Caco-2 (cell line): ENCODE measurements at regions of chr4 and their contacts with region 1.

Region 1: DNA sequence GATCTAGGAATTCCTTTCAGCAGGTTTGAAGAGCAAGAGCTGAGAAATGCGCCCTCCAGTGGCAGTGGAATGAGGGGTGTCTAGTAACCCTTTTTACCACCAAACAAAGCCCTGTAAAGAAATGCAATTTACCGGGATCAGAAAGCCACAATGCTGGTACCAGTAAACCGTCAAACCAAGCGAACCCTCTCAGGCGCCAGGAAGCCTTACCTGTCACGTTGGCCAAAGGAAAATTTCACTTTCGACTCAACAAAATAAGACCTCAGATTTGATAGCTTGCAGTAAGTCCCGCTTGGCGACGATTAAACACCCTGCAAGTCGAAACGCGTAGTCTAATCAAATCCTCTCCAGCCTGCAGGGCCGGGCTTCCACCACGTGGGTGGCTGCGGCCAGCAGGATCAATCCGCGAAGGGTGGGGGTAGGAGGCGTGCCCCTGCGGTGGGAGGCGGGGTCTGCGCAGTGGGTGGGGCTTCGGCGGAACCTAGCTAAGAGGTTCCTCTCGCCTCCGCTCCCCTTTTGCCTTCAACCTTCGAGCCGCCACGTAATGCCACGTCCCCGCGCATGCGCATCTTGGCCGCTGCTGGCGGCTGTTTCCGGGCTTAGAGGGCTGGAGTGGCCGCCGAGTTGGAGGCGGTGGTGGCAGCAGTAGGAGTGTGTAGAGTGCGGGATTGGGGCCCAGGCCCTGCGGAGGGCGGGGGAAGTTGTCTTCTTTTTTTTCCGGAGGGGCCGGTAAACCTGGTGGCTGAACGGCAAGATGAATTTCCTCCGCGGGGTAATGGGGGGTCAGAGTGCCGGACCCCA is at the start of gene USO1:
- DNase-seq: peak; percentile 98 to 99
- H3K4me3 ChIP-seq: peak within 1 kb of the TSS; percentile 99
- H3K4me3 Mint-ChIP-seq: peak within 1 kb of the TSS; percentile 90
- H3K27ac Mint-ChIP-seq: peak within 1 kb of the TSS; percentile 99
- H3K4me1 ChIP-seq: peaks cover 18% of the 10 kb centered on the region; the same call in 1 of the 2 replicates
- H3K4me1 Mint-ChIP-seq: peaks cover 15% of the 10 kb centered on the region
- H3K27me3 ChIP-seq: no peaks in the 10 kb centered on the region
- H3K27me3 Mint-ChIP-seq: no peaks in the 10 kb centered on the region
- CTCF ChIP-seq: peak; percentile 76 to 81
- total RNA-seq, gene USO1: 55.4 and 59.7 TPM in 2 replicates

Region 2: DNA sequence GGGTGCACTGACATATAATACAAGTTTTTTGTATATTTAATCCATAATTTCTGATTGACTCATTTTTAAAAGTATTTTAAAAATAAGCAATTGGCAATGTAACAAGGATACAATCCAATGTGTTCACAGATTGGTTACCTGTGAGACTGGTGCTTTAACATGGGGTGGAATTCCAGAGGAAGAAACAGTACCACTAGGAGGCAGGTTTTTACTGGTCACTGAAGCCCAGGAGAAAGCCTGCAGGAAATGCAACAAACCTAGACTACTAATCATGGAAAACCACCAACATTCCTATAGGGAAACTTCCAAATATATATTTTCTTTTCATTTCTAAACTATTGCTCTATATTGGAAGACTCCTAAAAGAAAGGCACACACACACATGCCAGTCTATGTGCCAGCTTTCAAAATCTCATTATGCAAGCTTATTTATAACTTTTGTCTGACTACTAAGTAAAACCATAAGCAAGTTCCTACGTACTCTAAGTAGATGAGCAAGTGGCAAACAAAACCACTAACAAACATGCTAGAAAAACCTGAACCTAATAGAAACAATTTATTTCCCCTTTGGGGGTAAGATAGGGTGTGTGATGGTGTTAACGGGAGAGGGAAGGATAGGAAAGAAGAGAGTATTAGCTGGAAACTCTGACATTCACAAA is 70.3 kb before region 1 on chr4:
- CTCF ChIA-PET with region 1: interaction called, 8 read pairs
- POLR2A ChIA-PET with region 1: interaction called, 3 read pairs
- intact Hi-C with region 1: loop called (anchors 1 kb)
- DNase-seq: peak in 1 of 2 experiments; percentile 56
- H3K4me3 ChIP-seq: no peak overlapping the region
- H3K4me3 Mint-ChIP-seq: no peak overlapping the region
- H3K27ac Mint-ChIP-seq: no peak overlapping the region
- H3K4me1 ChIP-seq: peaks cover 37% of the 10 kb centered on the region
- H3K4me1 Mint-ChIP-seq: peaks cover 6% of the 10 kb centered on the region
- H3K27me3 ChIP-seq: no peaks in the 10 kb centered on the region
- H3K27me3 Mint-ChIP-seq: no peaks in the 10 kb centered on the region
- CTCF ChIP-seq: peak; percentile 43 to 67

Region 3: DNA sequence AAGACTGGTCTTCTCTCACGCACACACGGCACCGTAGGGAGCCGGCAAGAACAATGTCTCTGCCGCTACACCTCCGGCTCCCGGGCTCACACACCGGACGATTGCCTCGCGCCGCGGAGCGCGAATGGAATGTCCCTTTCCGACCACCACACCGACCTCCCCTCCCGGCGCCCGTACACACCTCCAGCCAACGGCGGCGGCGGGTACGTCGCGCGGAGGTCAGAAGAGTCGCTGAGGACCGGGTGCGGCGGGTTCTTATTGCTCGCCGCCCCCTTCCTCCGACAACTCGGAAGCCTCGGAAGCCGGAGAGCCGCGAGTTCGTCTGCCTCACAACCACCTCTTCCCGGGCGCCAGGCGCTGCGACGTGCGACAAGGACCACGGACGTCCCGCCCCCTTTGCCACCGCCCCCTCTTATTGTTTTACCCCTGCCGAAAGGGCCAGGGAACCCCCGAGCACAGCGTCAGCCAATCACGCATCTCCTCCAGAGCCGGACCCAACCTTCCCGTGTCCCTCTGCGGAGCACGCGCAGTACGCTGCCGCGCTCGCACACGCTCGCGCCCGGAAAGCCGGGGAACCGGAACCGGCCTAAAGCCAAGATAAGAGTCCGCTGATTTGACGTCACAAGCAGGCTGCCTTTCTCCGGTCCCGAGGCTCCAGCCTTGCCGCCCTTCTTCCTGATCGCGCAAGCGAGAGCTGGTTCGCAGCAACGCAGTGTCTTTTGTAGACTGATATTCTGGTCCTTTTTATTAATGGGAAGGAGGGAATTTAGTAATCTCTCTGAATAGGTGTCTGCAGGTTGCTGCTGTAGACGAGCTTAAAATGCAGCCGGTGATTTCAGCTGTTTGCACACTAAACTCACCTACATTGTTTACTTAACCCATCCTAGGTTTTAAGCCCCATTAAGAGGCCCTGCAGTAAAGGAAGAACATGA is 51.0 kb before region 1 on chr4 and contains the start of gene G3BP2:
- CTCF ChIA-PET with region 1: interaction called, 5 read pairs
- POLR2A ChIA-PET with region 1: interaction called, 28 read pairs
- intact Hi-C with region 1: loop called (anchors 1 kb)
- DNase-seq: peak; percentile 97 to 98
- H3K4me3 ChIP-seq: peak within 1 kb of the TSS; percentile 76
- H3K4me3 Mint-ChIP-seq: peak within 1 kb of the TSS; percentile 96
- H3K27ac Mint-ChIP-seq: peak within 1 kb of the TSS; percentile 99
- H3K4me1 ChIP-seq: peaks cover 24% of the 10 kb centered on the region
- H3K4me1 Mint-ChIP-seq: peaks cover 20% of the 10 kb centered on the region
- H3K27me3 ChIP-seq: no peaks in the 10 kb centered on the region
- H3K27me3 Mint-ChIP-seq: no peaks in the 10 kb centered on the region
- CTCF ChIP-seq: no peak
- total RNA-seq, gene G3BP2: 187 TPM in 2 replicates

Region 4: DNA sequence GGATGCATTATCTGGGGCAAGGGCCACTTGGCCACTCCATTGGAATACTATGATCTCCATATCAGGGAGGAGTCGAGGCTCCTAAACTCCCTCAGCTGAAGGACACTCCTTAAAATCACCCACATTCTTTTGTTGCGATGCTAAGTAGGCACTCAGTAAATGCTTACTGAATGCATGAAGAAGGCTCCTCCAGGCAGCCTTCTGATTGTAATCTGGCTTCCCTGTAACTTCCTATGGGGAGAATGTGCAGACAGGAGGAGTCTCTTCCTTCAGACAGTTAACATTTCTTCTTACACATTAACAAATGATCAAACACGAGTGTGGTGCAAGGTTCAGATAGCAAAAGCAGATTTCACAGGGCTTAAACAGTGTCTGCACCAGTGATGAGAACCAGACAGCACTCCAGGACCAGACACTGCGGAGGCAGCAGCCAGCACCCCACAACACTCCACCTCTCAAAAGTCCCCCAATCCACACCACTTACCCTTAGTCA is 21.3 kb before region 1 on chr4:
- CTCF ChIA-PET with region 1: no interaction called
- POLR2A ChIA-PET with region 1: interaction called, 8 read pairs
- intact Hi-C with region 1: loop called (anchors 1 kb)
- DNase-seq: peak; percentile 52 to 57
- H3K4me3 ChIP-seq: no peak overlapping the region
- H3K4me3 Mint-ChIP-seq: peak overlapping the region; percentile 62
- H3K27ac Mint-ChIP-seq: peak overlapping the region; percentile 57
- H3K4me1 ChIP-seq: peaks cover 21% of the 10 kb centered on the region
- H3K4me1 Mint-ChIP-seq: peaks cover 19% of the 10 kb centered on the region
- H3K27me3 ChIP-seq: no peaks in the 10 kb centered on the region
- H3K27me3 Mint-ChIP-seq: no peaks in the 10 kb centered on the region
- CTCF ChIP-seq: no peak

Region 5: DNA sequence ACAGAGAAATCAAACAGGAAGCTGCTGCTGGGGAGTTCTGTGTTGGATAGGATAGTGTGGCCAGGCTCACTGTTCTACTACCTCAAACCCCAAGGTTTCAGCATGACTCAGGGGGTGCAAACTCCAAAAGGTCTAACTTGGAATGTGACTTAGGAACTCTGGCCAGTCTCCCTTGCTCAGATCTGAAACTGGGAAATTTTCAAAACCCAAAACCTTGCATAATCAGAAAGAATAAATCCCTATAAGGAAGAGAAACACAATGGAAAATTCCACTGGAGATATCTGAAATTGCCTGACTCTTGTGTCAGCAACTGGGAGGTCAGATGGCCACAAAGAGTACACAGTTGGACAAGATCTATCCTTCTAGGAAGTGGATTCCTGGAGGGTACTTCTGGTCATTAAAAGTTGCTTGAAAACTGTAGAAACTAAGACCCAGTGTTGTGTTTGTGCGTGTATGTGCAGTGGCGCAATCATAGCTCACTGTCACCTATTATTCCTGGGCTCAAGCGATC is 119.9 kb after region 1 on chr4:
- CTCF ChIA-PET with region 1: interaction called, 13 read pairs
- POLR2A ChIA-PET with region 1: interaction called, 5 read pairs
- intact Hi-C with region 1: loop called (anchors 1 kb)
- DNase-seq: peak; percentile 69 to 75
- H3K4me3 ChIP-seq: no peak overlapping the region
- H3K4me3 Mint-ChIP-seq: peak overlapping the region; percentile 13
- H3K27ac Mint-ChIP-seq: peak overlapping the region; percentile 86
- H3K4me1 ChIP-seq: peaks cover 53% of the 10 kb centered on the region
- H3K4me1 Mint-ChIP-seq: peaks cover 27% of the 10 kb centered on the region
- H3K27me3 ChIP-seq: no peaks in the 10 kb centered on the region
- H3K27me3 Mint-ChIP-seq: no peaks in the 10 kb centered on the region
- CTCF ChIP-seq: no peak